ENCODE measurements at regions of chr6 and their contacts with region 1.

Region 1: DNA sequence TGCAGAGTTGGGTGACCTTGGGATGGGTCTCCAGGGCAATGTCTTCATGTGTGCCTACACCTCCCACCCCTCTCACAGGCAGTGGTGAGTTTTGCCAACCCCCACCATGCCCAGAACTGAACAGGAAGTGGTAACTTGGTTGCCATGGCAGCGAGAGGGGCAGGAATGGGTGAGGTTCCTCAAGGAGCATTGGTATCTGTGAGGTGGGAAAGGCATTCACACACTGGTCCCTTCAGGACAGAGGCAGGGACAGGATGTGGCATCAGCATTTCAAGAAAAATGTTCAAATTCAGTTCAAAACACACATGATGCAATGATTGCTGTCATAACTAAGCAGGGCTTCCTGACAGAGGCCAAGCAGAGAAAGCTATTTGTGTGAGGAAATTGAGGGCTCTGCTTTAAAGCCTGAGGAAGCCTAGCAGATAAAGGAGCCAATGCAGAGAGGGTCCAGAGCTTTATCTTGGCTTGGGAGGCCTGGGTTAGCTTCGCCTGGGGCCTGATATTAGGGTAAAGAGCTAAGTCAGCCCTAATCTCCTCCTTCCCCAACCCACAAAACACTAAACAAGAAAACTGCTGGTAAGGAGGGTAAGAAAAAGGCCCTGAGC is 551 bp downstream of the TREML2 start:
- DNase-seq: peak; percentile 68
- ATAC-seq: peak; percentile 72
- H3K4me3 Mint-ChIP-seq: peak overlapping the region; percentile 90
- H3K27ac Mint-ChIP-seq: peak overlapping the region; percentile 100
- H3K4me1 Mint-ChIP-seq: peaks cover 54% of the 10 kb centered on the region
- H3K27me3 Mint-ChIP-seq: no peaks in the 10 kb centered on the region

Region 2: DNA sequence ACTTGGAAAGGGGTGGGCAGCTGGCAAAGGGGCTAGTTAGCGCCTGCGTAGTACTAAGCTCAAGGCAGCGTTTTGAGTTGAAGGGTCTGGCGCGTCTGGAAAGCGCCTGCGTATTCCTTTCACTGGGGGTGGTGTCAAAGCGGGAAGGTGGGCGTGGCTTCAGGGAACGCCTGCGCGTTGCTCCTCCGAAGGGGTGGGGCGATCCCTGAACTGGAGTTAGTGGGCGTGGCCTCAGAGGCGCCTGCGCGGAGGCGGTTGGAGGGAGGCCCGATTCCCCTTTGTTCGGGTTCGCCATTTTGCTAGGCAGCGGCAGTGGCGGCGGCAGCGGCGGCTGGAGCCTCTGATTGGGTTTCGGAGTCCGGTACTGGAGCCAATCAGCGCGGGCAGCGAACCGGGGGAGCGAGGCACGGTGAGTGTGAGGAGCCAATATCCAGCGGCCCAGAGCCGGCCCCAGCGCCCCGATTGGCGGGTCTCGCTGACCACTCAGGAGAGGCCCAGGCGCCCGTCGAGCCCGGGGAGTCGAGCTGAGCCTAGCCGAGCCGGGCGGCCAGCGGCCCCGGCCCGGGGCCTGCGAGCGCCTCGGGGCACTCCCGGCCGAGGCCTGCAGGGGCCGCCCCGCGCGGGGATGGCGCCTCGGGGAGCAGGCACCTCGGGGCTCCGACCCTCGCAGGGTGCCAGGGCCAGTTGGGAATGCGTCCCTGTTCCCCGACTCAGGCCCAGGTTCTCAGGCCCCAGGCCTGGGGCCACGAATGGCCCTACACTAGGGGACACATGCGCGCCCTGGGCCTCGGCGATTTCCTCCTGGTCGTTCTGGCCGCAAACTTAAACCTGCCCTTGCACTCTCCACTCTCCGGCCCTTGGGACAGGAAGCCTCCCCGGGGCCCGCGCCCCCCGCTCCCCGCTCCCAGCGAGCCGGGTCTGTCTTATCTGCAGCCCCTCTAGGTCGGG is 127.4 kb before region 1 on chr6 and contains the start of gene NFYA:
- POLR2A ChIA-PET with region 1: interaction called, 16 read pairs
- DNase-seq: peak; percentile 100
- ATAC-seq: peak; percentile 77
- H3K4me3 Mint-ChIP-seq: peak within 1 kb of the TSS; percentile 97
- H3K27ac Mint-ChIP-seq: peak within 1 kb of the TSS; percentile 99
- H3K4me1 Mint-ChIP-seq: peaks cover 43% of the 10 kb centered on the region
- H3K27me3 Mint-ChIP-seq: no peaks in the 10 kb centered on the region
- total RNA-seq, gene NFYA: 44.4 to 47.7 TPM

Region 3: DNA sequence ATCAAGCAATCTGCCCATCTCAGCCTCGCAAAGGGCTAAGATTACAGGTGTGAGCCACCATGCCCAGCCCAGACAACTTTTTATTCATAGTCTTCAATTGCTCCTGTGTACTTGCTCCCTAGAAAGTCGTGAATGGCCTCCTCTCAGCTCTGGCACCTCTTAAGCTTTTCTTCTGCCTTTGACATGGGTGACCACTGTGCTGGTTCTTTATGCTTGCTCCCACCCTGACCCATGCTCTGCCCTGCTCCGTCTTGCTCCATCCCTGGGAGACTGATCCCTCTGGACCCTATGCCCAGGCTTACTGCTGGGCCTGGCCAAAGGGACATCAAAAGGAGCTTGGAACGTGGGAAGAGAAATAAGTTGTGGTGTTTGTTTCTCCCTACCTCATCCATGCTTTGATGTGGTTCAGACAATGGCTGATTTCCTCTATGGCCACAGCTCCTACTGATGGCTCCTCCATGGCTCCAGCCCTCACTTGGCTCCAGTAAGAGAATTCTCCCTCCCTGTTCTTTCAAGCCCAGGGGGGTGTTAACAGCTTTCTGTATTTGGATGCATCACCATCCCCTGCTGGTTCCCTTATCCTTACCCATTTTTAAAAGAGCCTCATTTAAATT is 29.7 kb before region 1 on chr6:
- POLR2A ChIA-PET with region 1: no interaction called
- DNase-seq: no peak
- ATAC-seq: no peak
- H3K4me3 Mint-ChIP-seq: no peak overlapping the region
- H3K27ac Mint-ChIP-seq: no peak overlapping the region
- H3K4me1 Mint-ChIP-seq: no peaks in the 10 kb centered on the region
- H3K27me3 Mint-ChIP-seq: peaks cover 13% of the 10 kb centered on the region

Region 4: GRCh38 chr6:41186031-41186562 is 14.3 kb before region 1 on chr6:
- POLR2A ChIA-PET with region 1: interaction called, 11 read pairs
- DNase-seq: no peak
- ATAC-seq: no peak
- H3K4me3 Mint-ChIP-seq: peak overlapping the region; percentile 37
- H3K27ac Mint-ChIP-seq: peak overlapping the region; percentile 77
- H3K4me1 Mint-ChIP-seq: peaks cover 41% of the 10 kb centered on the region
- H3K27me3 Mint-ChIP-seq: no peaks in the 10 kb centered on the region

Region 5: DNA sequence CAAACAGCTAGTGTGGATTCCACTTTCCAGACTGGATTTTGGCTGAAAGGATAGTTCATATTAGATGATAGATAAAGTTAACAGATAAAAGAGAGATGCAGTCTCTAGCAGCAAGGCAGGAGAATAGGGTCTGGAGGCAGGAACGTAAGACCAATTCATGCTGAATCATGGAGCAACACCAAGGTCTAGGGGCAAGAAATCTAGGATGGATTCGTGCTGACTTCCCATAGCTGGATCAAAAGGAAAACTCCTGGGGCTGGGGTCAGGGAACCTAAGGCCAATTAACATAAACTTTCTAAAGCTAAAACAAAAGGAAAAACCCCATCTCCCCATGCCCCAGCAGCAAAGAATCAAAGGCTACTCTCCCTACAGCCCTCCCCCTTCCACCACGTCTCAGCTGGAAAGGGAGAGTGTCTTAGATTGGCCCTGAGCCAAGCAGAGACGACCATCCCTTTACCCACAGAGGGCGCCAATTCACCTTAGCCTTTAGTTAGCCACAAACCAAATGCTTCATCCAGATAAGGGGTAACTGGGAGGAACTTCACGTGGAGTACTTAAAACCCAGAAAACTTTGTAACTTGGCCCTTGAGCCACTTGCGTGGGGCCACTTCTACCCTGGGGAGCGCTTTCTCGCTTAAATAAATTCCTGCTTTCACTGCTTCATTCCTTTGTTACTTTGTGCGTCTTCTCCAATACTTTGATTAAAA is 78.5 kb after region 1 on chr6:
- POLR2A ChIA-PET with region 1: no interaction called
- DNase-seq: peak; percentile 58
- ATAC-seq: peak; percentile 89
- H3K4me3 Mint-ChIP-seq: no peak overlapping the region
- H3K27ac Mint-ChIP-seq: peak overlapping the region; percentile 37
- H3K4me1 Mint-ChIP-seq: peaks cover 15% of the 10 kb centered on the region
- H3K27me3 Mint-ChIP-seq: peaks cover 8% of the 10 kb centered on the region

Region 6: DNA sequence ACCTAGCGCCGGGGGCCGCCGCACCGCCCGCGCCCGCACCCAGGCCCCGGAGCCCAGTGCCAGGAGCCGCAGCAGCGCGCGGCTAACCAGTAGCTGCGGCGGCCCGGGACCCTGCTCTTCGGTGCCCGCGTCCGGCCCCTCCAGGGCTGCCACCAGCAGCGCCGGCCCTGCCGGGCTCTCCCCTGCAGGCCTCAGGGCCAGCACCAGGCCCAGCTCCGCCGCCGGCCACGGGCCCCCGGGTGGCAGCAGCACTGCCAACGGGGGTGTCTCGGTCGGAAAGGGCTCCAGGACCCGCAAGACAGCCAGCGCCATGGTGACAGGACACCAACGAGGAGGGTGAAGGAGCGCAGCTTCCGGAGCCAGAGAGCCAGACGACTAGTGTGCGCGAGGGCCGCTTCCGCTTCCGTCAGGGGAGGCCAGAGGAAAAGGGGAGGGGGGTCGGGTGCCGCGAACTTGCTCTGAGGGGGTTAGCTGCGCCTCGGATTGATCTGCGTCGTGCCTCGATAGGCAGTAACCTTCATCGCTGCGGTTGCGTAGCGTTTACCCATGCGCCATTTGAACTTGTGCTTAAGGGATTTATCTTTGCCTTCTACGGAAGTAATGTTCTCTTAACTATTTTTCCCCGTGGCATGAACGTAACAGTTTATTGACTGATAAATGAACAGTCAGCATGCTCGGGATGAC is 1778.6 kb after region 1 on chr6 and contains the start of gene PEX6:
- POLR2A ChIA-PET with region 1: no interaction called
- DNase-seq: peak; percentile 93
- ATAC-seq: peak; percentile 94
- H3K4me3 Mint-ChIP-seq: peak within 1 kb of the TSS; percentile 89
- H3K27ac Mint-ChIP-seq: peak within 1 kb of the TSS; percentile 98
- H3K4me1 Mint-ChIP-seq: peaks cover 34% of the 10 kb centered on the region
- H3K27me3 Mint-ChIP-seq: no peaks in the 10 kb centered on the region
- total RNA-seq, gene PEX6: 27.1 to 27.6 TPM